ENCODE measurements at regions of chr1 and their contacts with region 1.

Region 1: GRCh38 chr1:159598196-159598595 is 10.6 kb downstream of the APCS start:
- DNase-seq: peak; percentile 72
- H3K4me3 ChIP-seq: no peak overlapping the region
- H3K27ac ChIP-seq: peak overlapping the region; percentile 99
- H3K4me1 ChIP-seq: peaks cover 40% of the 10 kb centered on the region
- H3K27me3 ChIP-seq: no peaks in the 10 kb centered on the region
- CTCF ChIP-seq: no peak
- POLR2A ChIP-seq: peak; percentile 45

Region 2: GRCh38 chr1:159161001-159161718 is 437.0 kb before region 1 on chr1:
- CTCF ChIA-PET with region 1: interaction called, 3 read pairs
- POLR2A ChIA-PET with region 1: no interaction called
- dilution Hi-C with region 1: no loop called
- intact Hi-C with region 1: loop called (anchors 2 kb)
- DNase-seq: peak; percentile 86
- H3K4me3 ChIP-seq: no peak overlapping the region
- H3K27ac ChIP-seq: no peak overlapping the region
- H3K4me1 ChIP-seq: peaks cover 7% of the 10 kb centered on the region
- H3K27me3 ChIP-seq: peaks cover 5 to 10% of the 10 kb centered on the region in 2 experiments
- CTCF ChIP-seq: peak; percentile 96 to 99
- POLR2A ChIP-seq: peak; percentile 25

Region 3: GRCh38 chr1:159339536-159339935 is 258.7 kb before region 1 on chr1:
- CTCF ChIA-PET with region 1: no interaction called
- POLR2A ChIA-PET with region 1: no interaction called
- dilution Hi-C with region 1: no loop called
- intact Hi-C with region 1: no loop called
- DNase-seq: no peak
- H3K4me3 ChIP-seq: no peak overlapping the region
- H3K27ac ChIP-seq: no peak overlapping the region
- H3K4me1 ChIP-seq: no peaks in the 10 kb centered on the region
- H3K27me3 ChIP-seq: no peaks in the 10 kb centered on the region
- CTCF ChIP-seq: no peak
- POLR2A ChIP-seq: no peak

Region 4: DNA sequence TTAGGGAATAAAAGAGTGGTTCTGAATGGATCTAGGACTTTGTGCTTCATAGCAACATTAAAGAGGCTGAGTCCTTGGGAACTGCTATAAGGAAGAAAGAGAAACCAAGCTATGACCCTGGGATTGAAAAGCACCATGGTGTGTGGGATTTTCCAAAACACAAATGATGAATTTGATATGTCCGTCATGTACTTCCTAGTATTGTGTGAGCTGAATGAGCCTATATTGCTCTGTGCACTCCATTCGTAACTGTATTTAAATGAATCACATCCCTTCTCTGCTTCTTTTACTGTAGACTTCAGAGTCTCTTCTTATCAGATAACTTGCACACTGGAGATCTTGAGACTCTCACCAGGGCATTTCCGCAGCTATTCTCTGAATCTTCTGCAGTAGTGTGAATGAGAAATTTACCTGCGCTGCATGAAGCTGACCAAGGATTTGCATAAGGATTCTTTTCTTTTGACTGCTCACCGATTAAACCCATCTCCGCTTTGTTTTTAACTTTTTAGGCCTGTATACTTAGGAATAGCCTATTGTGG is 189.3 kb before region 1 on chr1:
- CTCF ChIA-PET with region 1: no interaction called
- POLR2A ChIA-PET with region 1: no interaction called
- dilution Hi-C with region 1: no loop called
- intact Hi-C with region 1: loop called (anchors 5 kb)
- DNase-seq: peak; percentile 98
- H3K4me3 ChIP-seq: peak overlapping the region in 1 of 3 experiments; percentile 39
- H3K27ac ChIP-seq: peak overlapping the region; percentile 90
- H3K4me1 ChIP-seq: peaks cover 10% of the 10 kb centered on the region
- H3K27me3 ChIP-seq: no peaks in the 10 kb centered on the region
- CTCF ChIP-seq: no peak
- POLR2A ChIP-seq: no peak

Region 5: DNA sequence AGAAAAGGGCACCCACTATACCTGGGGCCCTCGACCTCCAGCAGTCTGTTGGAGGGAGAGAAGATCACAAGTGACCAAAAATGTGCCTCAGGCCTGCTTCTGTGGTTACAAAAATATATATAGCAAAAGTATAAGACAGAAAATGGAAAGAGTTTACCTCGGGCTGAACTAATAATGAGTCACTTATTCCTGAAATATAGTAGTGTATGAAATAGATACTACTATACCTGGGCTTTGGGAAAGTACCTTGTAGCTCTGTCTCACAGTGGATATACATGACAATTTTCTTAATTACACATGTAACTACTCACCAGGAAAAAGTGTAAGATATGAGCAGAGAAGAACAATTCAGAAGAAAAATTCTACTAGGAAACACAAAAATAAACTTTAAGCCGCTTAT is 17.9 kb before region 1 on chr1:
- CTCF ChIA-PET with region 1: no interaction called
- POLR2A ChIA-PET with region 1: no interaction called
- dilution Hi-C with region 1: no loop called
- intact Hi-C with region 1: no loop called
- DNase-seq: no peak
- H3K4me3 ChIP-seq: no peak overlapping the region
- H3K27ac ChIP-seq: no peak overlapping the region
- H3K4me1 ChIP-seq: no peaks in the 10 kb centered on the region
- H3K27me3 ChIP-seq: no peaks in the 10 kb centered on the region
- CTCF ChIP-seq: no peak
- POLR2A ChIP-seq: no peak

Region 6: GRCh38 chr1:159653201-159653600 is 55.0 kb after region 1 on chr1:
- CTCF ChIA-PET with region 1: interaction called, 5 read pairs
- POLR2A ChIA-PET with region 1: no interaction called
- dilution Hi-C with region 1: no loop called
- intact Hi-C with region 1: loop called (anchors 1 kb)
- DNase-seq: peak; percentile 88
- H3K4me3 ChIP-seq: no peak overlapping the region
- H3K27ac ChIP-seq: peak overlapping the region; percentile 93
- H3K4me1 ChIP-seq: peaks cover 29% of the 10 kb centered on the region
- H3K27me3 ChIP-seq: no peaks in the 10 kb centered on the region
- CTCF ChIP-seq: no peak
- POLR2A ChIP-seq: no peak

Region 7: GRCh38 chr1:159700312-159700711 is 102.1 kb after region 1 on chr1:
- CTCF ChIA-PET with region 1: no interaction called
- POLR2A ChIA-PET with region 1: no interaction called
- dilution Hi-C with region 1: no loop called
- intact Hi-C with region 1: no loop called
- DNase-seq: no peak
- H3K4me3 ChIP-seq: no peak overlapping the region
- H3K27ac ChIP-seq: no peak overlapping the region
- H3K4me1 ChIP-seq: no peaks in the 10 kb centered on the region
- H3K27me3 ChIP-seq: no peaks in the 10 kb centered on the region
- CTCF ChIP-seq: no peak
- POLR2A ChIP-seq: no peak